Caco-2 (cell line): ENCODE measurements at regions of chr2 and their contacts with region 1.

Region 1: GRCh38 chr2:74458132-74458925 is at the start of gene WBP1:
- DNase-seq: peak; percentile 100
- H3K4me3 ChIP-seq: peak within 1 kb of the TSS; percentile 65
- H3K4me3 Mint-ChIP-seq: peak within 1 kb of the TSS; percentile 95
- H3K27ac Mint-ChIP-seq: peak within 1 kb of the TSS; percentile 74
- H3K4me1 ChIP-seq: peaks cover 10% of the 10 kb centered on the region; the same call in 1 of the 2 replicates
- H3K4me1 Mint-ChIP-seq: peaks cover 42% of the 10 kb centered on the region
- H3K27me3 ChIP-seq: no peaks in the 10 kb centered on the region
- H3K27me3 Mint-ChIP-seq: no peaks in the 10 kb centered on the region
- CTCF ChIP-seq: no peak
- total RNA-seq, gene WBP1: 53.4 and 54.8 TPM in 2 replicates

Region 2: GRCh38 chr2:74250189-74250631 is 208.1 kb before region 1 on chr2:
- CTCF ChIA-PET with region 1: no interaction called
- POLR2A ChIA-PET with region 1: no interaction called
- intact Hi-C with region 1: loop called (anchors 5 kb)
- DNase-seq: peak; percentile 44 to 55
- H3K4me3 ChIP-seq: no peak overlapping the region
- H3K4me3 Mint-ChIP-seq: no peak overlapping the region
- H3K27ac Mint-ChIP-seq: no peak overlapping the region
- H3K4me1 ChIP-seq: no peaks in the 10 kb centered on the region
- H3K4me1 Mint-ChIP-seq: no peaks in the 10 kb centered on the region
- H3K27me3 ChIP-seq: no peaks in the 10 kb centered on the region
- H3K27me3 Mint-ChIP-seq: no peaks in the 10 kb centered on the region
- CTCF ChIP-seq: peak; percentile 85 to 86

Region 3: DNA sequence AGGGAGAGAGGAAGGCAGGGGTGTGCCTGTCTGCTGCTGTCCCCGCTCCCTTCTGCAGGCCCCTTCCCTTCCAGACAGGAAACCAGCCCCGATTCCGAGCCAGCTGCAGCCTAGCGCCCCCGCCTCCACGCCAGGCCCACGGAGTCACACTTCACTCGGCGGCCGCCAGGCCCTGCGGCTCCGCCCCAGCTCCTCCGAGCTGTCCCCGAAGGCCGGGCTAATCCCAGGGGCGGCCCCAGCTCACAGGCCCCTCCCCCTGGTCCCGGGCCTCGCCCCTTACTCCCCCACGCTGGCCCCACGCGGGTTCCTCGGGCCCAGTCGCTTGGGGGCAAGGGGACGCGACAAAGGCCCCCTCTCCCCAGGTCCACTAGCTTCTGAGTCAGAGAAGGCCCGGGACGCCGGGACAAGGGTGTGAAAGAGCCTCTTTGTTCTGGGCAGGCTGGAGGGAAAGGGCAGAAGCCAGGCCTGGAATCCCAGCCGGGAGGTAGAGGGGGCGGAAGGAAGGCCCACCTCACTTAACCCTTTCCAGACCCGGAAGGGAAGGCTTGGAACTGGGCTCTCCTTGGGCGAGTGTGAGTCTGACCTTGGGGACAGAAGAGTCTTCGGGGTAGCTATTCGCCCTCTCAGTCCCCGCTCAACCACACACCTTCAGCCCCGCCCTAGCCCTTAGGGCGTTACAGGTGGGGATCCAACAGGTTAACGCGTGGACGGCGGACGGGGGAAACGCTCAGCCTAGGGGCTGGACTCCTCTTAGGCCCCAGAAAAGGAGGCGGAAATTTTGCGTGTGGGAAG is 17.8 kb before region 1 on chr2:
- CTCF ChIA-PET with region 1: interaction called, 8 read pairs
- POLR2A ChIA-PET with region 1: interaction called, 25 read pairs
- intact Hi-C with region 1: loop called (anchors 1 kb)
- DNase-seq: peak; percentile 93 to 95
- H3K4me3 ChIP-seq: peak overlapping the region; percentile 94
- H3K4me3 Mint-ChIP-seq: peak overlapping the region; percentile 97
- H3K27ac Mint-ChIP-seq: peak overlapping the region; percentile 99
- H3K4me1 ChIP-seq: peaks cover 20% of the 10 kb centered on the region; the same call in 1 of the 2 replicates
- H3K4me1 Mint-ChIP-seq: peaks cover 13% of the 10 kb centered on the region
- H3K27me3 ChIP-seq: no peaks in the 10 kb centered on the region
- H3K27me3 Mint-ChIP-seq: no peaks in the 10 kb centered on the region
- CTCF ChIP-seq: peak in 1 of 2 experiments; percentile 28

Region 4: GRCh38 chr2:74482801-74483674 is 24.7 kb after region 1 on chr2 and contains the starts of genes CCDC142 and TTC31:
- CTCF ChIA-PET with region 1: interaction called, 8 read pairs
- POLR2A ChIA-PET with region 1: interaction called, 7 read pairs
- intact Hi-C with region 1: loop called (anchors 1 kb)
- DNase-seq: peak; percentile 95 to 96
- H3K4me3 ChIP-seq: peak within 1 kb of the TSS; percentile 76
- H3K4me3 Mint-ChIP-seq: peak within 1 kb of the TSS; percentile 82
- H3K27ac Mint-ChIP-seq: peak within 1 kb of the TSS; percentile 90
- H3K4me1 ChIP-seq: peaks cover 12% of the 10 kb centered on the region
- H3K4me1 Mint-ChIP-seq: peaks cover 25% of the 10 kb centered on the region
- H3K27me3 ChIP-seq: no peaks in the 10 kb centered on the region
- H3K27me3 Mint-ChIP-seq: no peaks in the 10 kb centered on the region
- CTCF ChIP-seq: peak; percentile 89 to 95
- total RNA-seq, gene CCDC142: 39.0 and 47.1 TPM in 2 replicates
- total RNA-seq, gene TTC31: 31.3 and 32.4 TPM in 2 replicates

Region 5: GRCh38 chr2:74529357-74530238 is 71.3 kb after region 1 on chr2 and contains the starts of genes AUP1 and HTRA2:
- CTCF ChIA-PET with region 1: interaction called, 5 read pairs
- POLR2A ChIA-PET with region 1: interaction called, 5 read pairs
- intact Hi-C with region 1: loop called (anchors 2 kb)
- DNase-seq: peak; percentile 99
- H3K4me3 ChIP-seq: peak within 1 kb of the TSS; percentile 78
- H3K4me3 Mint-ChIP-seq: peak within 1 kb of the TSS; percentile 99
- H3K27ac Mint-ChIP-seq: peak within 1 kb of the TSS; percentile 99
- H3K4me1 ChIP-seq: peaks cover 6% of the 10 kb centered on the region
- H3K4me1 Mint-ChIP-seq: peaks cover 18% of the 10 kb centered on the region
- H3K27me3 ChIP-seq: no peaks in the 10 kb centered on the region
- H3K27me3 Mint-ChIP-seq: no peaks in the 10 kb centered on the region
- CTCF ChIP-seq: no peak
- total RNA-seq, gene AUP1: 154 and 156 TPM in 2 replicates
- total RNA-seq, gene HTRA2: 27.0 and 27.3 TPM in 2 replicates

Region 6: DNA sequence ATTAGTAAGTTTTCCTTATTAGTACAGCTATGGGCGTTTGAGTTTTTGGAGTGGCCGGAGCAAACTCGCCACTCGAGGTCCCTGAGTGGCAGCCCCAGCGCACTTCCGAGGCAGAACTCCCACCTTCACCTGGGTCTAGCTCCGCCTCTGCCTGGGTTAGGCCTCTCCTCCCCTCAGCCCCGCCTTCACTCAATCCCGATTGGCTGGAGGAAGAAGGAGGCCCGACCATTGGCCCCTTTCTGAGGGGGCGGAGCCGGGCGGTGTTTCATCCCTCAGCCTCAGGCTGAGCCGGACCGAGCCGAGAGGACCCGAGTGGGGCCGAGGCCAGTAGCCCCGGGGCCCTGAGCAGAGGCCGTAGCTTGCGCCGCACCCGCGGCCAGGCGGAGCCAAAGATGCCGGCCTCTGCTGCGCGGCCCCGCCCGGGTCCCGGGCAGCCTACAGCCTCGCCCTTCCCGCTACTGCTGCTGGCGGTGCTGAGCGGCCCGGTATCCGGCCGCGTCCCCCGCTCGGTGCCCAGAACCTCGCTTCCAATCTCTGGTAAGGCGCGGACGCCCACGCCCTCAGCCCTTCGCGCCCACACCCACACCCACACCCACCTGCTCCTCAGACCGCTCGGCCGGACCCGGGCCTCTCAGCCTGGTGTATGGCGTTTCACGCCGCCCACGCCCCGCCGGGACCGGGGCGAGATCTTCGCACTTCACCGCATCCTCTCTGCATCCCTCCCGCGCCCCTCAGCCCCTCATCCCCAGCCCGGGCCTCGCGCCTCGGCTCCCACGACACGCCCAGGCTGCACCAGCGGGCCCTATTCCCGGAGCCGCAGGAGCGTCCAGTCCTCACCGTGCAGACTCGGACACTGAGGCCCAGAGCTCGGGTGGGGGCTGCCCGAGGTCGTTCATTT is 195.9 kb after region 1 on chr2 and contains the start of gene SEMA4F:
- CTCF ChIA-PET with region 1: no interaction called
- POLR2A ChIA-PET with region 1: no interaction called
- intact Hi-C with region 1: no loop called
- DNase-seq: peak; percentile 99
- H3K4me3 ChIP-seq: peak within 1 kb of the TSS; percentile 82
- H3K4me3 Mint-ChIP-seq: peak within 1 kb of the TSS; percentile 73
- H3K27ac Mint-ChIP-seq: peak within 1 kb of the TSS; percentile 42
- H3K4me1 ChIP-seq: no peaks in the 10 kb centered on the region
- H3K4me1 Mint-ChIP-seq: peaks cover 10% of the 10 kb centered on the region
- H3K27me3 ChIP-seq: peaks cover 2% of the 10 kb centered on the region; the same call in 1 of the 2 replicates
- H3K27me3 Mint-ChIP-seq: no peaks in the 10 kb centered on the region
- CTCF ChIP-seq: no peak
- total RNA-seq, gene SEMA4F: 6.2 and 7.6 TPM in 2 replicates